Activated CD8-positive, alpha-beta T cell treated with anti-CD3 and anti-CD28 coated beads, Interleukin-2, amount 10 ng/mL, durations not matched to agents 7 days and 5 days (primary cell): ENCODE measurements at regions of chr4 and their contacts with region 1.

Region 1: GRCh38 chr4:151015459-151016347 is 619 bp upstream of the LRBA start:
- DNase-seq: peak; percentile 82
- ATAC-seq: peak; percentile 82
- H3K4me3 Mint-ChIP-seq: peak overlapping the region; percentile 100
- H3K27ac Mint-ChIP-seq: peak overlapping the region; percentile 99
- H3K4me1 Mint-ChIP-seq: peaks cover 24% of the 10 kb centered on the region
- H3K27me3 Mint-ChIP-seq: no peaks in the 10 kb centered on the region

Region 2: DNA sequence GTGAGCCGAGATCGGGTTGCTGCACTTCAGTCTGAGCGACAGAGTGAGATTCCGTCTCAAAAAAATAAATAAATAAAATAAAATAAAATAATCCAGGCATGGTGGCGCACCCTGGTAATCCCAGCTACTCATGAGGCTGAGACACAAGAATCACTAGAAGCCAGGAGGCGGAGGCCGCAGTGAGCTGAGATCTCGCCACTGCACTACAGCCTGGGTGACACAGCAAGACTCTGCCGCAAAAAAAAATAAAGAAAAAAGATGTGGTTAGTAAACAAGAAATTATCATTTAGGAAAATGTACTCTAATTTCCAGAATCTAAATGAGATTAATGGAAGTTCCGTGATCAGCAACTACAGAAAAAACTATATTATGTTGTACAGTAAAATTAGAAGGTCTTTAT is 13.8 kb after region 1 on chr4:
- CTCF ChIA-PET with region 1: no interaction called
- POLR2A ChIA-PET with region 1: interaction called, 16 read pairs
- DNase-seq: no peak
- ATAC-seq: no peak
- H3K4me3 Mint-ChIP-seq: no peak overlapping the region
- H3K27ac Mint-ChIP-seq: no peak overlapping the region
- H3K4me1 Mint-ChIP-seq: peaks cover 9% of the 10 kb centered on the region
- H3K27me3 Mint-ChIP-seq: no peaks in the 10 kb centered on the region